ENCODE measurements at regions of chr5 and their contacts with region 1.

Region 1: GRCh38 chr5:45038366-45038987 is 229.7 kb downstream of the MRPS30 start:
- DNase-seq: no peak
- H3K4me3 ChIP-seq: no peak overlapping the region
- H3K27ac ChIP-seq: no peak overlapping the region
- H3K4me1 ChIP-seq: no peaks in the 10 kb centered on the region
- H3K27me3 ChIP-seq: no peaks in the 10 kb centered on the region
- CTCF ChIP-seq: peak; percentile 27 to 61 (median 49)
- EP300 ChIP-seq: no peak
- POLR2A ChIP-seq: no peak

Region 2: DNA sequence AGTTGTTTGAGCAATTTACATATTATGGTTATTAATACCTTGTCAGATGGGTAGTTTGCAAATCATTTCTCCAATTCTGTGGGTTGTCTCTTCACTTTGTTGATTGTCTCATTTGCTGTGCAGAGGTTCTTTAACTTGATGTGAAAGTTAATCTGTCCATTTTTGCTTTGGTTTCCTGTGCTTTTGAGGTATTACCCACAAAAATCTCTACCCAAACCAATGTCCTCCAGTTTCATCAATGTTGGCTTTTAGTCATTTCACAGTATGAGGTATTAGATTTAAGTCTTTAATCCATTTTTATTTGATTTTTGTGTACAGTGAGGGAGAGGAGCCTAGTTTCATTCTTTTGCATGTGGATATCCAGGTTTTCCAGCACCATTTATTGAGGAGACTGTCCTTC is 147.4 kb before region 1 on chr5:
- intact Hi-C with region 1: no loop called
- DNase-seq: no peak
- H3K4me3 ChIP-seq: no peak overlapping the region
- H3K27ac ChIP-seq: no peak overlapping the region
- H3K4me1 ChIP-seq: no peaks in the 10 kb centered on the region
- H3K27me3 ChIP-seq: no peaks in the 10 kb centered on the region
- CTCF ChIP-seq: no peak
- EP300 ChIP-seq: no peak
- POLR2A ChIP-seq: no peak

Region 3: DNA sequence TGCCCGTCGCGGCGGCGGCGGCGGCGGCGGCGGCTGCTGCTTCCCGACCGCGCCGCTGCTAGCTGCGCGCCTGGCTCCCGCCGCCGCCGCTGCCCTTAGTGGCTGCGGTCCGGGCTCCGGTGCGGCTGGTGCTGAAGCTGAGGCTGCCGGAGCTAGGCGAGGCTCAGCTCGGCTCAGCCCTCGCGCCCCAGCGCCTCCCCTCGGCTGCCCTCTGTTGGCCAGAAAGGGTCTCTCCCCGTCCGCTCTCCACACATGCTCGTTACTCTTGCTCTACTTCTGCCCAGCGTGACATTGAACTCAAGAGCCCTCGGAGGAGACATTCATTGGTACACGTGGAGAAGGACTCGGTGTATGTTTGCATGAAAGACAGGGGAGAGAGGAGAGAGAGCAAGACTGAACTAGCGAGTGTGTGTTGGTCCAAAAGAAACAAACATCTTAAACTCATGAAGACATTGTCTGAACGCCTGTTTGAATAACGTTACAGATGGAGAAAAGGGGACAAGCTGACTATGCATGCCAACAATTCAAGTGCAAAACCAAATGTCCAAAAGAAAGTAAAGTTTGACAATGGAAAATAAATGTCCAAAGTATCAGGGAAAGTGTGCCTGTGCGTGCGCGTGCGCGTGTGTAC is 657.8 kb after region 1 on chr5 and contains the start of gene HCN1:
- intact Hi-C with region 1: loop called (anchors 2 kb)
- DNase-seq: no peak
- H3K4me3 ChIP-seq: peak within 1 kb of the TSS; percentile 45 to 58 (median 50)
- H3K27ac ChIP-seq: no peak within 1 kb of the TSS
- H3K4me1 ChIP-seq: peaks cover 9 to 14% (median 14%) of the 10 kb centered on the region in 4 donors
- H3K27me3 ChIP-seq: peaks cover 0 to 67% (median 11%) of the 10 kb centered on the region in 4 donors
- CTCF ChIP-seq: peak; percentile 59 to 80 (median 63)
- EP300 ChIP-seq: no peak
- POLR2A ChIP-seq: no peak
- total RNA-seq, gene HCN1: 0.39 to 0.66 (median 0.49) TPM

Measured in esophagus muscularis mucosa (tissue), 4 donors.